Mammary epithelial cell (primary cell): ENCODE measurements at regions of chr12 and their contacts with region 1.

Region 1: DNA sequence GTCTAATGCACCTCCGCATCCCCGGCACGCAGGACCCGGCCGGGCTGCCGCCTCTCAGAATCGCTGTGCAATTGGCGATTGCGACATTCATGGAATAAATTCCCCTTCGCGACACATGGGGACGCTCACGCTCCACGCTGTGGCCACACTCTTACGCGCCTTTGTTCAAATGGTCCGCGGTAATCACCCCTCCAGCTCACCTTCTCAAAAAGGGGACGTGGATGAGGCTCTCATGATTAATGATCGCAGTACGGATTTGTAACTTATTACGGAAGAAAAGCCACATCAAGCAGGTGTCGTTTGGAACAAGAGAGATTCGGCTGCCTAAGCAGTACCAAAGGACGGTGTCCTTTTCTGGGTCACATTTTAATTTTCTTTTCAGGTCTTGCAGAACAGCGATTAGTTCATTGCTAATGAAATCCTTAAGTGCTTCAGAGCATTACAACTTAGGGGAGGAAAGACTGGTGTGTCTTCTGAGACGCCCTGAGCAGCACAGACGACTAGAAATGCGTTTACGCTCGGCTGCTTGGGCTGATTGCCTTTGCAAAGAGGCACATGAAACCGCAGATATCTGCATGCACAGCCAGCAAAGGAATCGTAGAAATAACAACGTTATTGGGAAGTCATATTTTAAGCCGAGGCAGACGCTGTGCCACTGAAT is 37.3 kb upstream of the ADGRD1 start:
- DNase-seq: peak; percentile 21
- H3K4me3 ChIP-seq: no peak overlapping the region
- H3K27ac ChIP-seq: no peak overlapping the region
- H3K4me1 ChIP-seq: no peaks in the 10 kb centered on the region
- H3K27me3 ChIP-seq: no peaks in the 10 kb centered on the region
- CTCF ChIP-seq: peak; percentile 59 to 87

Region 2: DNA sequence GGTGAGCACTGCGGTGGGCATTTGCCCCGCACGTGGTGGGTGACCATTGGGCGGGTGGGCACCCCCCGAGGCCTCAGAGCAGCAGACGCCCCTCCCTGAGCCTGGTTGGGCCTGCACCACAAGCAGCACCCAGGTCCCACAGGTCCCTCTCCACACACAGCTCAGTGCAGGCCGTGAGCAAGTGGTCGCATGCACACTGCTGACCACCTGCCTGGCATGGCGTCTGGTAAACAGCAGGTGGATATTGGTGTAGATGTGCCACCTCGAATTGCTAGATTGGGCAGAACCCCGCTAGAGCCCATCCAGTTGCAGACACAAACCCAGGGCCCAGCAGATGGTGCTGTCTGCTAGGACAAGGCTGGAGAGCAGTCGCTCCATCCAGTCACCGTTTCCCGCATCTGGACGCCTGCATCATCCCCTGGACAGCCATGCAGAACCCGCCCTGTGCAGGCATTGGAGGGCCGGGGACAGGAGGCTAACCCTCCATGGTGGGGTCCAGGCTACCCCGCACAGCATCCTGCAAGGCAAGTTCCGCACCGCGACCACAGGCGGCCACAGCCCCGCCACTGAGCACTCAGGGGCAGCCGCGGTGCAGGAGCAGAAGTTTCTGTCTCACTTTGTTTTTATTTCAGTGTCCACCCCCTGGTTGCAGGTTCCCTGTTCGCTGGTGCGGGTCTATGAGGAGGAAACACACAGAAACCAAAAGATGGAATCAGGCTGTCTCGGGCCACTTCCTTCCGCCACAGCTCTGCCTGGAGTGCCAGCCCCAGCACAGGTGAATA is 154.7 kb before region 1 on chr12:
- CTCF ChIA-PET with region 1: no interaction called
- dilution Hi-C with region 1: no loop called
- in situ Hi-C with region 1: no loop called
- intact Hi-C with region 1: loop called (anchors 5 kb)
- DNase-seq: peak; percentile 37
- H3K4me3 ChIP-seq: no peak overlapping the region
- H3K27ac ChIP-seq: no peak overlapping the region
- H3K4me1 ChIP-seq: no peaks in the 10 kb centered on the region
- H3K27me3 ChIP-seq: no peaks in the 10 kb centered on the region
- CTCF ChIP-seq: peak; percentile 46 to 80

Region 3: GRCh38 chr12:131808744-131809371 is 892.5 kb after region 1 on chr12:
- CTCF ChIA-PET with region 1: no interaction called
- dilution Hi-C with region 1: no loop called
- in situ Hi-C with region 1: loop called in 1 of 2 experiments (anchors 25 kb)
- intact Hi-C with region 1: no loop called
- DNase-seq: no peak
- H3K4me3 ChIP-seq: peak overlapping the region in 2 of 3 experiments; percentile 34 to 43
- H3K27ac ChIP-seq: no peak overlapping the region
- H3K4me1 ChIP-seq: peaks cover 8% of the 10 kb centered on the region
- H3K27me3 ChIP-seq: no peaks in the 10 kb centered on the region
- CTCF ChIP-seq: no peak